ENCODE measurements at regions of chr16 and their contacts with region 1.

Region 1: DNA sequence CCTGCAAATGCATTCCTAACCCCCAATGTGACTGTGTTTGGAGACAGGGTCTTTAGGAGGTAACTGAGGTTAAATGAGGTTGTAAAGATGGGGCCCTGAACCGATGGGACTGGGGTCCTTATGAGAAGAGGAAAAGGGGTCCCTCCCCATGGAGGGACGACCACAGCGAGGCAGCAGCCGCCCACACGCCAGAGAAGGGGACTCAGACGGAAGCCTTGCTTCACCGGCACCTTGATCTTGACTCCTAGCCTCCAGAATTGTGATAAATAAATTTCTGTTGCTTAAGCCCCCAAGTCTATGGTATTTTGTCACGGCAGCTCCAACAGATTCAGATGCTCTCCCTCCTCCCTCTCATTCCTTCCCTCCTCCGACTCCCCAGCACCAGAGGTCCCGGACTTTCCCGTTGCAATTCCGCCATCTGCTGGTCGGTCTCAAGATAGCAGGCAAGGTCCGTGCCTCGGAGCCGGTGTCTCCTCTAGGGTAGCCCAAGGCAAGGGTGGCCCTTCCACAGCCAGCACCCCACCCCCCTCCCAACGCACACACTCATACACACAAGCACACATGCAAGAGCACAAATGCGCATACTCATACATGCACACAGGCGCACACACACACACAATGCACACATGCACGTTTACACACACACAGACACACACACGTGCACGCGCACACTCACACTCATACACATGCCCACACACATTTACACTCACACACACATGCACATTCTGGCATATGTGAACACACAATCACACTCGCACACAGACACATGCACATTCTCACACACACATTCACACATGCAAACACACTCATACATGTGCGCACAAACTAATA is 23.1 kb upstream of the C16orf78 start:
- DNase-seq: peak; percentile 65 to 79
- H3K4me3 ChIP-seq: no peak overlapping the region
- H3K4me3 Mint-ChIP-seq: no peak overlapping the region
- H3K27ac Mint-ChIP-seq: no peak overlapping the region
- H3K4me1 ChIP-seq: no peaks in the 10 kb centered on the region
- H3K4me1 Mint-ChIP-seq: no peaks in the 10 kb centered on the region
- H3K27me3 ChIP-seq: no peaks in the 10 kb centered on the region
- H3K27me3 Mint-ChIP-seq: peaks cover 6% of the 10 kb centered on the region
- CTCF ChIP-seq: peak; percentile 90 to 91

Region 2: DNA sequence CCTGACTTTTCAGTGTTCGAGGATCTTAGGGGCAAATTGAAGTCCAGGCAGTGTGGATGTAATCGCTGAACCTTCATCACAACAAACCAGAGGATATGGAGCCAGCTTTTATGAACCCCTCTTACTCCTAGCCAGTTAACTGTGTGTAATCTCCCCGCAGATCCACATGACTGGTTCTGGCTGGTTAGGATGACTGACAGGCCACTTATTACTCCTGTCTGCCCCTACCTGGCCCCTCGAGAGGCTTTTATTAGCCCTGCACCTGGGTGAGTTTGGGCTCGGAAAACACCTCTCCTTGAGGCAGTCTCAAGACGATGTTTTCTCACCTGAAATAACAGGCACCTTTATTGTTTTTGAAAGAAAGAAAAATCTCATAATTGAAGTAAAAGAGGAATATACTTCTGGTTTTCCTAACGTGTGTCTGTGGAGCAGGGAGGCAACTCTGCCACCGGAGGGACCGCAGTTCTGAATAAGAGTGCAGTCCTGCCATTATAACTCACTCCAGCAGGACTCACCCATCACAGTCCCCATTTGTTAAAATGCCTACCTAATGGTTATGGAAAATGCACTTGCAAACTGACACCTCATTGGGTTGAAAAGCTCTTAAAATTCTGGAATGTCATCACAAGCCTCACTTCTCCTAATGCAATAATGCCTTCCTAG is 448.6 kb before region 1 on chr16:
- CTCF ChIA-PET with region 1: no interaction called
- POLR2A ChIA-PET with region 1: no interaction called
- intact Hi-C with region 1: loop called (anchors 5 kb)
- DNase-seq: no peak
- H3K4me3 ChIP-seq: no peak overlapping the region
- H3K4me3 Mint-ChIP-seq: no peak overlapping the region
- H3K27ac Mint-ChIP-seq: no peak overlapping the region
- H3K4me1 ChIP-seq: peaks cover 3% of the 10 kb centered on the region; the same call in 1 of the 2 replicates
- H3K4me1 Mint-ChIP-seq: no peaks in the 10 kb centered on the region
- H3K27me3 ChIP-seq: no peaks in the 10 kb centered on the region; the same call in 1 of the 2 replicates
- H3K27me3 Mint-ChIP-seq: peaks cover 28% of the 10 kb centered on the region
- CTCF ChIP-seq: peak; percentile 15 to 38